Spleen (tissue), 13 donors: ENCODE measurements at regions of chr5 and their contacts with region 1.

Region 1: DNA sequence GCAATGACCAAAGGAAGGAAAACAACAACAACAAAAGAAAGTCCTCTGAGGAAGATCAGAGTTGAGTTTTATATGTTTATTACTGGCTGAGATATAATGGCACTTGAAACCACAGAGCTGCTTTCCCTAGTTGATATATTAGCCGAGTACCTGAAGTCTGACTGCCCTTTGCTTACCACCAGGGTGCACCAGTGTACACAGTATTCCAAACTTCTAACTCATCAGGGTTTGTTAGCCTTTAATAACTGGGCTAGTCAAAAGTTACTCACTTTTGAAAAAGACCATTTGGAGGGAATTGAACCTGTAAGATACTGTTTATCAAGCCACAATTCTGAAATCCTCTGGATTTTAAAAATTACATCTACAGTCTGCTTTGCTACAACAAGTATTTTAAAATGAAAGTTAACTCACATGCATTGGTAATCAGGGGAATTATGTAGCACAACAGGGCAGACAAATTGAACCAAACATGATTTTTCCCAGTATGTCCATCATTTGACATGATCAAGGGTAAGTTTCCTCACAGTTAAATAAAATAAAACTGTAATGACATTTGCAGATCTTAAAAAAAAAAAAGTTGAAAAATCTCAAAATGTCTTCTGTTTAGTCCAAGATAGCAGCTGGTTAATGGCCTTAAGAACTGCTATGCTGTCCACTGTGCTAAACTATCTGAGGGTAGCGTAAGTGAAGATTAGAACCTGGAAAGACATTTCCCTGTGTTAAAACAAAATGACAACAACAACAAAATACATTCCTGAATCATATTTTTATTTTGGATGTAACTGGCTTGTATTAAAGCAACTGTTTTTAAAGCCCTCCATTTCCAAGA is 57.3 kb upstream of the C6 start:
- DNase-seq: no peak
- H3K4me3 ChIP-seq: no peak overlapping the region
- H3K27ac ChIP-seq: no peak overlapping the region
- H3K4me1 ChIP-seq: peaks cover 0 to 3% (median 0%) of the 10 kb centered on the region in 6 donors
- H3K27me3 ChIP-seq: no peaks in the 10 kb centered on the region
- CTCF ChIP-seq: peak in 10 of 11 experiments; percentile 13 to 66 (median 56)
- POLR2A ChIP-seq: no peak

Region 2: DNA sequence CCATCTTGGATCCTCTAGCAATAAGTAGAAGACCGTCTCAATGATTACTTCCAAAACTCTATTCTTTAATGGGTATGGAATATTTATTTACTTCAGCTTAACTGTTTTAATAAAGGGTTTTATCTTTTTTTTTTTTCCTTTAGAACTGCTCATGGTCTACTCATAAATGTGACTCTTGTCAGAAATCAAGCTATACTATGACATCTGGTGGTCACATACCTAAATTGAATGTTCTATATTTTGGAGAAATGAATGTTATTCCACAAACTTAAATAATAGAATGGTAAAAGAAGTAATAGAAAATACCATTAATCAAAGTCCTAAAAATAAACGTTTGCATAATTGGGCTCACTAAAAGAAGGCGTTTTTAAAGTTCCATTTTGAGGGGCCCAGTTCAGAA is 371.0 kb after region 1 on chr5:
- intact Hi-C with region 1: loop called (anchors 10 kb)
- DNase-seq: no peak
- H3K4me3 ChIP-seq: no peak overlapping the region
- H3K27ac ChIP-seq: no peak overlapping the region
- H3K4me1 ChIP-seq: no peaks in the 10 kb centered on the region
- H3K27me3 ChIP-seq: peaks cover 0 to 5% (median 0%) of the 10 kb centered on the region in 7 donors
- CTCF ChIP-seq: no peak
- POLR2A ChIP-seq: no peak